T-cell (primary cell): ENCODE measurements at regions of chr10 and their contacts with region 1.

Region 1: GRCh38 chr10:133308421-133309110 is at the starts of genes TUBGCP2 and ZNF511:
- DNase-seq: peak; percentile 76 to 96 (median 87)
- ATAC-seq: peak; percentile 70 to 78 (median 75)
- H3K4me3 ChIP-seq: peak within 1 kb of the TSS; percentile 84 to 91
- H3K4me3 Mint-ChIP-seq: peak within 1 kb of the TSS; percentile 87 to 98 (median 97)
- H3K27ac ChIP-seq: peak within 1 kb of the TSS; percentile 99
- H3K27ac Mint-ChIP-seq: peak within 1 kb of the TSS; percentile 98 to 100
- H3K4me1 ChIP-seq: peaks cover 4 to 40% of the 10 kb centered on the region in 2 experiments
- H3K4me1 Mint-ChIP-seq: peaks cover 38 to 39% (median 38%) of the 10 kb centered on the region in 3 donors
- H3K27me3 ChIP-seq: no peaks in the 10 kb centered on the region
- H3K27me3 Mint-ChIP-seq: no peaks in the 10 kb centered on the region
- total RNA-seq, gene TUBGCP2: 64.5 to 80.8 (median 72.7) TPM
- total RNA-seq, gene ZNF511: 35.2 to 44.7 (median 36.8) TPM

Region 2: GRCh38 chr10:133276435-133277201 is 31.9 kb before region 1 on chr10 and contains the start of gene ADAM8:
- CTCF ChIA-PET with region 1: interaction called in 1 of 2 experiments, 3 read pairs
- POLR2A ChIA-PET with region 1: interaction called, 4 to 11 read pairs
- DNase-seq: peak in 33 of 35 experiments; percentile 33 to 79 (median 55)
- ATAC-seq: peak; percentile 42 to 64 (median 58)
- H3K4me3 ChIP-seq: peak within 1 kb of the TSS; percentile 41 to 89
- H3K4me3 Mint-ChIP-seq: peak within 1 kb of the TSS; percentile 82 to 89 (median 82)
- H3K27ac ChIP-seq: peak within 1 kb of the TSS; percentile 97
- H3K27ac Mint-ChIP-seq: peak within 1 kb of the TSS; percentile 96 to 99
- H3K4me1 ChIP-seq: peaks cover 12 to 69% of the 10 kb centered on the region in 2 experiments
- H3K4me1 Mint-ChIP-seq: peaks cover 27 to 40% (median 40%) of the 10 kb centered on the region in 3 donors
- H3K27me3 ChIP-seq: no peaks in the 10 kb centered on the region
- H3K27me3 Mint-ChIP-seq: no peaks in the 10 kb centered on the region
- total RNA-seq, gene ADAM8: 80.5 to 142 (median 107) TPM

Region 3: DNA sequence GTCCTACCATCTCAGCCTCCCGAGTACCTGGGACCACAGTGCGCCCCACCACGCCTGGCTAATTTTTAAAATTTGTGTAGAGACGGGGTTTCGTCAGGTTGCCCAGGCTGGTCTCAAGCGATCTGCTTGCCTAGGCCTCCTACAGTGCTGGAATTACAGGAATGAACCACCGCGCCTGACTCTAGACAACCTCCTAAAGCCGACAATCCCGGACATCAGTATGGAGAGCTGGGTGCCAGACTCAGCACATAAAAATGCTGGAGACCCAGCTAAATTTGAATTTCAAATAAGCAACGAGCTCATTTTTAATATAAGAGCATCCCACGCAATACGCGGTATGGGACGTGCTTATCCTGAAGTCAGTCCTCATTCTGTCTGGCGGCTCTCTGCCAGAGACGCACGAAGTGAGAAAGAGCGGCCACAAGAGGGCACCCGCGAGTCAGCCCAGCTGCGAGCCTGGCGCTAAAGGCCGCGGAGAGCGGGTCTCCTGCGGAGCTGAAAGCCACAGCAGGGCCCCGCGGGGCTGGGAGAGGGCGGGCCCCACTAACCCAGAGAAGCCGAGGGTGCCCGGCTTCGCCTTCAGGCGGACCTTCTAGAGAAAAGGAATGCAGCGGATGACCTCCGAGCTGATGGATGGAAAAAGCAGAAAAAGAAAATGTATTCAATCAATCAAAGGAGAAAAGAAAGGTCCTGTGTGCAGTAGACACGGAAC is 21.1 kb after region 1 on chr10:
- CTCF ChIA-PET with region 1: interaction called, 3 to 10 read pairs
- POLR2A ChIA-PET with region 1: interaction called in 1 of 2 experiments, 3 read pairs
- DNase-seq: peak; percentile 53 to 94 (median 81)
- ATAC-seq: peak; percentile 85 to 89 (median 87)
- H3K4me3 ChIP-seq: peak overlapping the region in 1 of 2 donors; percentile 21
- H3K4me3 Mint-ChIP-seq: peak overlapping the region in 1 of 3 donors; percentile 61
- H3K27ac ChIP-seq: no peak overlapping the region
- H3K27ac Mint-ChIP-seq: peak overlapping the region in 1 of 2 donors; percentile 76
- H3K4me1 ChIP-seq: peaks cover 5 to 34% of the 10 kb centered on the region in 2 experiments
- H3K4me1 Mint-ChIP-seq: peaks cover 10 to 16% (median 15%) of the 10 kb centered on the region in 3 donors
- H3K27me3 ChIP-seq: peaks cover 2 to 57% of the 10 kb centered on the region in 2 experiments
- H3K27me3 Mint-ChIP-seq: peaks cover 10 to 42% of the 10 kb centered on the region in 2 donors